Dendritic cell treated with granulocyte-macrophage colony-stimulating factor and Interleukin-4, amounts not matched to agents 40 ng/mL and 50 ng/mL, for 4 days (primary cell): ENCODE measurements at regions of chr9 and their contacts with region 1.

Region 1: DNA sequence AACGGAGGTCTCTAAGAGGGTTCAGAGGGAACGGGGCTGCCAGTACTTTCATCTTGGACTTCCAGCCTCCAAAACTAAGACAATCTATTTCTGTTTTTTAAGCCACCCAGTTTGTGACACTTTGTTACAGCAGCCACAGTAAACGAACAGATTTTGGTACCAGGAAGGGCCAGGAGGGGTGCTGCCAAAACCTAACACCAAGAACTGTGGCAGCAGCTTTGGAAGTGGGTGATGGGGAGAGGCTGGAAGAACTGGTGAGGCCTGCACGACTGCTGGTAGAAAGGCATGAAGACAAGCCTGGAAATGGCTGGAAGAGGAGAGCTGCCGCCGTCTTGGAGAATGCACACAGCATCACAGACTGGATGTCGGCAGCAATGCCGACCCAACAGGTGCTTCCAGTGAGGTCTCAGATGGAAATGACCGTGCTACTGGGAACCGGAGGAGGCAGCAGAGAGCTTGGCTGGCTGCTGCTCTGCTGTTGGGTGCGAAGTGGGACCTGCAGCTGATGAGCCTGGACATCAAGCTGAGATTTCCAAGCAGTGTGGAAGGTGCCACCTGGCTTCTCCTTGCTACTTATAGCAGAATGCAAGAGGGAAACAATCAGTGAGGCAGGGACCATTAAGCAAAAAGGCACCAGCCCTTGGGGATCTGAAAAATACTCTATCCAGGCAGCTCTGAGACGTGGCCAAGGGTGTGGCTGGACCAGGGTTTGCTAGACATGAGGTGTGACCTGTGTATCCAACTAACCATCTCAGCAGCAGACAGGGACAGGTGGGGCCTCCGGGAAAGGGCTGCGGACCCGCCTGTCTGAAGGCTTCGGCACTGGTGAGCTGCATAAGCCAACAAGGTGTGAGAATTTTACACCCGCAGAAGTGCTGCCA is 4.7 kb upstream of the TMEM210 start:
- H3K4me3 Mint-ChIP-seq: no peak overlapping the region
- H3K27ac Mint-ChIP-seq: no peak overlapping the region
- H3K4me1 Mint-ChIP-seq: peaks cover 8% of the 10 kb centered on the region
- H3K27me3 Mint-ChIP-seq: peaks cover 24% of the 10 kb centered on the region

Region 2: DNA sequence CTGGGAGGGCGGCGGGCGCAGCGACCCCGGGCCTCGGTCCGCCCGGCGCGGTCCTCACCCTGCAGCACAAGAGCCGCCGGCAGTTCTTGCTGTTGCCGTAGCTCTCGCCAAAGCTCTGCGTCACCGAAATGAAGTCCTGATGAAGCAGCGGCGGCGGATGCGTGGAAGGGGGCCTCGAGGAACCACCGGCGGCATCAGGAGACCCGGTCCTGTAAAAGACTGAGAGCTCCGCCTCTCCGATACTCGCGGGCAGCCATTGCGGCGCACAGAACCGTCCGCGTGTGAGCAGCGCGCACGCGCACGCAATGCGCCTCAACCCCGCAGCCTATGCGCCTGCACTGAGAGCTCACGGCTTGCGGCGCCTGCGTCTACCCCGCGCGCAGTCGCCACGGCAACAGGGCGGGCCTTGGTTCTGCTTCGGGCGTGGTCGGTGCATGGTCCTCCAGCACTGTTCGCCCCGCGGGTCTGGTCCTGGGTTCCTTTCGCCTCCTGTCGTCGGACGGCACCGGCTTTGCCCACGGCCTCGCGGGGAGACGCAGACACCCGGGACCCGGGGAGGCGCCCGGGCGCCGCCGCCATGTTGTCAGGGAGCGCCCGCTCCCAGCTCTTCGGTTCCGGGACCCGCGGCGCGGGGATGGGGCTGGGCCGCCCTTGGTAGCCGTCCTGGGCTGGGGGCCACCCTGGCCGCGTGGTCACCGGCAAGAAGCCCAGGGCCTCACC is 46.9 kb before region 1 on chr9:
- intact Hi-C with region 1: loop called (anchors 10 kb)
- H3K4me3 Mint-ChIP-seq: peak overlapping the region; percentile 80
- H3K27ac Mint-ChIP-seq: peak overlapping the region; percentile 61
- H3K4me1 Mint-ChIP-seq: peaks cover 28% of the 10 kb centered on the region
- H3K27me3 Mint-ChIP-seq: peaks cover 34% of the 10 kb centered on the region